Activated CD8-positive, alpha-beta memory T cell treated with anti-CD3 and anti-CD28 coated beads, Interleukin-2, amount 10 ng/mL, durations not matched to agents 7 days and 5 days (primary cell): ENCODE measurements at regions of chr11 and their contacts with region 1.

Region 1: DNA sequence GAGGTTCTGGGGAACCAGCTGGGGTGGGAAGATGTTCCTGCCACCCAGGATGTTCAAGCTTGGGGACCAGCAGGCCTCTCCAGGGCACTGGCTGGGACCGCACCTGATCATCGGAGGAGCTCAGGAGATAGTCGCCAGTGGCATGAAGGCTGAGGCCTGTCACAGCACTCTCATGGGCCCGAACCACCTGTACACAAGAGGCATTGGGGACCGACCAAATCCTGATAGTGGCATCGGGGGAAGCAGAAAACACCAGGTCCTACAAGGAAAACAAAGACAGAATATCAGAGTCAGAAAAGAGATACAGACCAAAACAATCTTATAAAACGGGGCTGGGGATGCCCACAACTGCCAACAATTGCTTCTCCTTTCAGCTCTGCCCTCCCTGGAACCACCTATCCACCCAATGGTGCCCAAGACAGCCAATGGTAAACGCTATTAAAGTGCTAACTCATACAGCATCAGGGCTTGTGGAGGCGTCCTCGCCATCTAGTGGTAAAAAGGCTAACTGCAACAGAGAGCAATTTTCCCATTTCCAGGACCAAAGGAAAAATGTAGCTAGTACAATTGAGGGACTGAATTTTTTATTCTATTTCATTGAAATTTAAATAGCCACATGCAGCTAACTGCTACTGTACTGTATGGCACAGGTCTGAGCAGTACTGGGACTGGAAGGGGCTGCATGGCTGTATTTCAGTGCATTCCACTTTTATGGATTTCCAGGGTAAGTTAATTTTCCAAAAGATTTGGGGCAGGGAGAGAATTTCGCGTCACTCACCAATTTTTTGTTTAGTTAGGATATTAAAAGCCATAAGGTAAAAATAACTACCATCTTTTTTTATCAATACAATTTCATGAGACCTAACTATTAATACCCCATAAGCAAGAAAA is 7.1 kb downstream of the PRPF19 start:
- DNase-seq: no peak
- ATAC-seq: peak; percentile 76
- H3K4me3 Mint-ChIP-seq: no peak overlapping the region
- H3K27ac Mint-ChIP-seq: peak overlapping the region; percentile 33
- H3K4me1 Mint-ChIP-seq: peaks cover 13% of the 10 kb centered on the region
- H3K27me3 Mint-ChIP-seq: no peaks in the 10 kb centered on the region

Region 2: GRCh38 chr11:60345489-60345888 is 553.8 kb before region 1 on chr11:
- CTCF ChIA-PET with region 1: no interaction called
- DNase-seq: no peak
- ATAC-seq: peak; percentile 39
- H3K4me3 Mint-ChIP-seq: no peak overlapping the region
- H3K27ac Mint-ChIP-seq: no peak overlapping the region
- H3K4me1 Mint-ChIP-seq: no peaks in the 10 kb centered on the region
- H3K27me3 Mint-ChIP-seq: peaks cover 33% of the 10 kb centered on the region

Region 3: DNA sequence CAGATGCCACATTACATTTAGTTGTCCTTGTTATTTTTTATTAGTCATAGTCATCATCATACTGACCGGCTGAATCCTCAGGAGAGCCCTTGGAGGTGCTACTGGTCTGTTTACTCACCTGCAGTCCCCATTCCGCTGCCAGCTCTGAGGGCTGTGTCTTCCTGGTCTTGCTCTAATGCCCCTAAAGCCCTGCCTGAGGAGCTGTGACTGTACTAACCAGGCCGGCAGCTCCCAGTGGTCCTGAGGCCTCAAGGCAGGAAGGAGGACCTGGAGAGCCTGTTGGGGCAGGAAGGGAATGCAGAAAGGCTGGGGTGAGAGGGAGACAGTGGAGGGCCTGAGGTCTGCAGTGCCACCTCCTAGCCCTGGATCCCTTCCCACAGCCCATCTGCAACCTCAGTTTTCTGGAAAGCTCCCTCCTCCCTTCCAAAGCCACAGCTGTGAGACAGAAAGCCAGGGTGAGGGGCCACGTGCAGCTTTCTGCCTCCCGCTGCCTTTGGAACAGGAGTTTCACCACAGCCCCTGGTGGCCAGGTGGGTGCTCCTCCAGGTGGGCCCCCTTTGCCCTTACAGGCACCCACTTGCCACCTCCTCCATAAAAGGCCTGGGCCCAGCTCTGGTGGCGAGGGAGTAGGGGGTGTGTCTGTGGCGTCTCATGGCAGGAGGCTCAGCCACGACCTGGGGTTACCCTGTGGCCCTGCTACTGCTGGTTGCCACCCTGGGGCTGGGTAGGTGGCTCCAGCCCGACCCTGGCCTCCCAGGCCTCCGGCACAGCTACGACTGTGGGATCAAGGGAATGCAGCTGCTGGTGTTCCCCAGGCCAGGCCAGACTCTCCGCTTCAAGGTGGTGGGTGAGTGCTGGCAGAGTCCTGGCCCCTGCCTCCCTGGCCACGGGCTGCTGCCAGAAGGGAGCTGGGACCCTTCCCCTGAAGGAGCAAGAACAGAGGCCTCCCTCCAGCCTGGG is 32.1 kb before region 1 on chr11 and contains the start of gene ZP1:
- CTCF ChIA-PET with region 1: interaction called, 11 read pairs
- DNase-seq: no peak
- ATAC-seq: no peak
- H3K4me3 Mint-ChIP-seq: peak within 1 kb of the TSS; percentile 20
- H3K27ac Mint-ChIP-seq: peak within 1 kb of the TSS; percentile 82
- H3K4me1 Mint-ChIP-seq: peaks cover 76% of the 10 kb centered on the region
- H3K27me3 Mint-ChIP-seq: no peaks in the 10 kb centered on the region
- total RNA-seq, gene ZP1: not detected

Region 4: DNA sequence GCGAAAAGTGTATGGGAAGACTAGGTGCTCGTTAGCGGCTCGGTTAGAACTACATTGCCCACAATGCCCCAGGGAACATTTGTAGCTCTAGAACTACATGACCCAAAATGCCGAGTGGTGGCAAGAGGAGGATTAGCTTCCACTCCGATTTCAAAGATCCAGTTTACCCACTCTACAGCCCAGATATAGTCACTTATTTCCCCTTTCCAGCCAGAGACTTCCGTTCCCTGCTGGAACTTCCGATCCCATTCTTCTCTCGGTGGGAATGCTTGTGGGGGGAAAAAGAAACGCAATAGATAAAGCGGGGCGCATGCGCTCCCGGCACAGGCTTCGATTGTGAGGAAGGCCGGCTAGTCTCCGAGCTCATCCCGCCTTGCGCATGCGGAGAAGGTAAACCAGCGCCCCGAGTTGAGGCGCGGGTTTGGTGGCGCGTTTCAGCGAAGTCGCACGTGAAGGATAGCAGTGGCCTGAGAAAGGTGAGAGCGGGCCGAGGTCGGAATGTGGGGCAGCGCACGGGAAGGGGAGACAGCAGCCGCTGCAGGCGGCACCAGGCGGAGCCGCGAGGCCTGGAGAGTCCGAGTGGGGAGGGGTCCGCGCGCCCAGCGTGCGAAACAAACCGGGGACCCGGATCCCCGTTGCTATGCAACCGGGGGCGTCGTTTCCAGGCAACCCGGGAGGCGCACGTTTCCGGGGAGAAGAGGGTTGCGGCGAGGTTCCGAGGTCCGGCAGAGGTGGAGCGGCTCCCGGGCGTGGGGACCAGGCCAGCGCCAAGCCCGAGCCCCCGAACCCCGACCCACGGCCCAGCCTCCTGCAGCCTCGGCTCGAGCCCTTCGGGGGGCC is 14.7 kb after region 1 on chr11 and contains the start of gene TMEM109:
- CTCF ChIA-PET with region 1: interaction called, 38 read pairs
- DNase-seq: peak; percentile 93
- ATAC-seq: peak; percentile 77
- H3K4me3 Mint-ChIP-seq: peak within 1 kb of the TSS; percentile 94
- H3K27ac Mint-ChIP-seq: peak within 1 kb of the TSS; percentile 98
- H3K4me1 Mint-ChIP-seq: peaks cover 36% of the 10 kb centered on the region
- H3K27me3 Mint-ChIP-seq: peaks cover 11% of the 10 kb centered on the region
- total RNA-seq, gene TMEM109: 106 to 121 TPM

Region 5: DNA sequence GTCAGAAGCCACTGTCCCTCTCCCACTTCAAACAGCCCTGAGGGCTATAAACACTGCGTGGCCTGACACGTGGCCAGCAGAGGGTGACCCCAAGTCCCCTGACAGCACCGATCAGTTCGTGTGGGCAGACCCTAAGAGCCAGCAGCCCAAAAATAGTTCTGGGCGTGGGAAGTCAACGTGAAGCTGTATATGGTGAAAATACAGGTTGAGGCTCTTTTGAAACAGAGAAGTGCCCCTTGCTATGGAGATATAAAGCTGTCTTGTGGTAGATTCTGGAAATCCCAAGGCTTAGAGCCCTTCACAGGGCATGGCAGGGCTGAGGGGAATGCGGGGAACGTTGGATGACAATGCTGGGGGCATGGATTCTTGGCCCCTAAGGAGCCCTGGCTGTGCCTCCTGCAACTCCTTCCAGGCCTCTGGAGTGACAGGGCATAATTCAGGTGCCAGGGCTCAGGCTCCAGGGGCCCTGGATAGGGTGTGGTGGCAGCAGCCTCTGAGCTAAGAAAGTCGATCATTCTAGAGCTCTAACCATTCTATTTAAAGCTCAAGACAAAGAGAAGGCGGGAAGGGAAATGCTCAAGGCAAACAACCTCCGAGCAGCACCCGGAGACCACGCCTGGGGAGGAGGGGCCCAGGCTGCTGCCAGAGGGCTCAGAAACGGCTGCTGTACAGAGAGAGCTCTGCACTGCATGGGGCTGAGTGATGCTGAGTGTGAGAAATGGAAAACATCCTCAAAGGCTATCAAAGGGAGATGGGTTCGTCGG is 142.6 kb after region 1 on chr11:
- CTCF ChIA-PET with region 1: no interaction called
- DNase-seq: peak; percentile 94
- ATAC-seq: peak; percentile 99
- H3K4me3 Mint-ChIP-seq: peak overlapping the region; percentile 74
- H3K27ac Mint-ChIP-seq: peak overlapping the region; percentile 94
- H3K4me1 Mint-ChIP-seq: peaks cover 50% of the 10 kb centered on the region
- H3K27me3 Mint-ChIP-seq: no peaks in the 10 kb centered on the region